ENCODE measurements at regions of chr5 and their contacts with region 1.

Region 1: DNA sequence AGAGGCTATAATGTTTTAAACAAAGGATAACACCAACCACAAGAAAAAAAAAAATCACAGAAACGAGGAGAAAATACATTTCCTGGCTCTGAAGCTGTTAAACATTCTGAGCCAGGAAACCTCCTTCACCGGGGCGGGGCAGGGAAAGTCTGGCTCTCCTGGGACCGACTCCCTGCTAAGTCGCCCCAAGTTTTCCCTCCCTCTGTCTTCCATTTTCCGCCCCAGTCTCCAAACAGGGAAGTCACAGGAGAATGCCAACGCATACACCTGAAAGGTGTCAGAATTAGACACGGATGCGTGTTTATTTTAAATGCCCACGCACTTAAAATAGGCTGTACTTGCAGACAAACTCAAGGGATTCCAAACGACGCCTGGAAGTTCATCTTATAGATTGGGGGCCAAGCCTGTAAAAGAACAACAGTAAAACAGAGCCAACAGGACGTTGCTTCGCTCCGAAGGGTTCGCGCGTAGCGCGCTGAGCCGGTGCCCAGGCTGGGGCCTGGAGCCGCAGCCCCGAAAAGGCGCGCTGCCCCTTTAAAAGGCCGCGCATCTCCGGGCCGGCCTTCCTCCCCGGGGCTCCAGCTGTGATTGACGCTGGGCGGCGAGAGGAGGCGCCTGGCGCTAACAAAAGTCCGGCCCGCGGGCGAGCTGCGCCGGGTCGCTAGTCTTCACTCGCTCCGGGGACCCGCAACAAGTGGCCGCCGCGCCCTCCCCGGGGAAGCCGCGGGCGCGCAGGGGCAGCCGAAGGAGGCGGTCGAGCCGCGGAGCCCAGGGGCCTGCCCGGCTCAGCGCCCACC is at the start of gene FBXL7:
- DNase-seq: peak; percentile 93
- total RNA-seq, gene FBXL7: 22.1 to 29.9 TPM

Region 2: GRCh38 chr5:15203376-15203775 is 296.4 kb before region 1 on chr5:
- intact Hi-C with region 1: no loop called
- DNase-seq: no peak

Region 3: GRCh38 chr5:15283076-15283475 is 216.7 kb before region 1 on chr5:
- intact Hi-C with region 1: no loop called
- DNase-seq: no peak

Region 4: DNA sequence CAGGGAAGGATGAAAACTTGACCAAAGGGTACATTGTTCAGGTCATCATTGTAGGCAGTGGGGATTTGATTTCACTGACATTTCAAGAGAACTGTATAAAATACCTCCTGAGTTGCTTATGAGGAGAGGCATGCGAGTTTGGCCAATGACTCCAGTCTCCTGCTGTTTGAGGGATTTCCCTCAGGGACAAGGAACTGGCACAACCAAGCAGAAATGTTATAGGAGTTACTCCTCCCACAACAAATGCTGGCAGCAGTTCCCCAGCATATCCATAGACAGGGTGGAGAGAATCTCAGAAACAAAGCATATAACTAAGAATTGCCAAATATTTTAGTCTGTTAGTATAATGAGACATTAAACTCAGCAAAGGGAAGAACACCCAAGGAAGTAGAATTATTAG is 46.9 kb before region 1 on chr5:
- intact Hi-C with region 1: no loop called
- DNase-seq: no peak

Region 5: GRCh38 chr5:15834596-15835245 is 335.0 kb after region 1 on chr5:
- intact Hi-C with region 1: loop called in 1 of 2 experiments (anchors 10 kb)
- DNase-seq: no peak

Measured in posterior vena cava (tissue), 2 donors.